ENCODE measurements at regions of chr13 and their contacts with region 1.

Region 1: DNA sequence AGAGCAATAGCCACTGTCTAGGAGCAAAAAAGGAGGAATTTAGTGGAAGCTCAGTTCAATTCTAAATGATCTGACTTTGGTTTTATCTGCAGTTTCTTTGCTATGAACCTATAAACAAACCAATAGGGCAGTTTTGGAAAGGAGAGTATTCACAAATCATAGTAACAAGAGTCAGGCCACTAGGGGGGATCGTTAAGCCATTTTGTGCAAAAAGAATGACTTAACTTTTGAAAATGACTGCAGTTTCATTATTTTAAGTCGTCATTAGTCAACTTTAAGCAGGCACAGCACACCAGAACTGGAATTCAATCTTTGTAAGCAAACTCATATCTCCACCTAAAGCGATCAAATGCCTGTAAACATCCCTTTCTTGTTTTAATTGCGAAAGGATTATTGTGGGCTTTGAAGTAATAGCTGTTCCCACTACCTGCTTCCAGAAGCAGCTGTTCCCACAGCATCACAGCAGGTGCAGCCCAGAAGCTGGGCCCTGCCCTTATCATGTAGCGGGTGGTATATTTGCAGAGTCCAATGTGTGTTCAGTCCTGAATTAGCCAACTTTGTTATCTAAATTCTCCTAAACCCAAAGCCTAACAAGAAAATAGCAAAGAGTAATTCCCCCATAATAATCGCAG is 51.5 kb downstream of the SOX21 start:
- DNase-seq: no peak

Region 2: DNA sequence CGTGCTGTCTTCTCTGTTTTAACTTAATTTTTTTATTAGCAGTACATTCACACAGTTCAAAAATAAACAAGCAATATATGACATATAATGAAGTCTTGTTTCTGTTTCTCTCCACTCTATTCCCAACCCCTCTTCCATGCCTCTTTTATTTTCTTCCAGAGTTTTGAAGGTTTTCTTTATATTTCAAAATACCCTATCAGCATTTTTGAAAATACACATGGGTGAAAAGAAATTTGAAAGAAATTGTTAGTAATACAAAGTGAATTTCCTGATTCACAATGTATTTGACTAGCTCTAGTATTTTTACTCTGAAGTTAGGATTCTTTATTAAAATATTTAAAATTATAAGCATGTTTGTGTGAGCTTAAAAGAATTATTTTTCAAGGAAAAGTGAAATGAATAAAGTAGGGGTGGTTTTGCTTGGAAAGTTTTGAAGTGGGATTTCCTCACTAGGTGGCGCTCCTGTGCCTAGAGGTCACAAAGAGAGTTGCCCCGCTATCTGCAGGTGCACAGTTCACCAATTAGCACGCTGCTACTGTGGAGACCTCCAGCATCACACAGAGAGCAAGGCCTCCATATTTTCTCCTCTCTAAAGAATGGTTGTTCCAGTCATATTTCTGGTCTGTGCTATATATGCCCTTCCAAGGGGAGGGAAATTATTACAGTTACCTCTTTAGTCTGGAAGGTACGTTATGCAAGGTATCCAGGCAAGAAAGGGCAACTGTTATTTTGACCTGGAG is 14.0 kb after region 1 on chr13:
- CTCF ChIA-PET with region 1: interaction called, 31 read pairs
- POLR2A ChIA-PET with region 1: interaction called, 3 read pairs
- DNase-seq: peak; percentile 92